Heart right ventricle (tissue), 16 donors: ENCODE measurements at regions of chr2 and their contacts with region 1.

Region 1: DNA sequence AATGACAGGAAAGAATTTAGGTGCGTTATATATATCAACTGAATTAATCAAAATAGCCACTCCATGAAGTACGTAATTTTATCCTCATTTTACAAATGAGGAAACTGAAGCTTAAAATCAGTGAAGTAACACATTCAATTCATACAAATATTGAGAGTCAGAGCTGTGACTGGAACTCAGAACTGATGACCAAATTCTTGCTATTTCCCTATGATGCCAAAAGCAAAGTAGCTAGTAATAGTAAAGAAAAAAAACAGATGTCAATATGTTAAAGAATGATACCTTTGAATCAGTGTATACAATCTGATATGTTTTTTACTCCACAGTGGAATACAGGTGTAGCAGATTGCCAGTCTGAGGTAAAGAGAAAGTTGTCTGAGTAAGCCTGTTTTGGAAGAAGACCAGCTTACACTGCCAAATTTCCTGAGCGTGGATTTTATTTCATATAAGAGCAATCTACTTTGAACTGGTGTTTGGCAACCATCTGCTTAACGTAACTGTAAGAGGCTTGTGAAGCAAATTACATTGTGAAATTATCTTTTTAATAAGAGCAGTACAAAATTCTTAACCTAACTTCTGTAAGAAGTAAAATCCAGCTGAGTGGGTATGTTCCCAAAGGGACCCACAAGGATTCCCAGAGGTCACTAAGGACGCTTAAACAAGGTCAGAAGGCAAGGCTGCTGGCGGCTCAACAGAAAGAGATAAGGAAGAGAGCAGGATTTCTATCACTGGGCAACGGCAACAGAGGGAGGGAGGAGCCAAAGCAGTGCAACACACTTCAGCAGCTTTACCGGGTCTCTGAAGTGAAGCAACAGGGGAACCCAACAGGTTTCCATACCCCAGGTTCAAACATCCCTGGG is 85.6 kb downstream of the IKZF2 start:
- DNase-seq: peak; percentile 22 to 29
- ATAC-seq: peak in 7 of 8 donors; percentile 51 to 91 (median 89)
- H3K4me3 ChIP-seq: peak overlapping the region in 8 of 10 donors; percentile 1 to 35 (median 29)
- H3K27ac ChIP-seq: peak overlapping the region in 8 of 10 donors; percentile 3 to 61 (median 52)
- H3K4me1 ChIP-seq: peaks cover 0 to 29% (median 10%) of the 10 kb centered on the region in 9 donors
- H3K27me3 ChIP-seq: no peaks in the 10 kb centered on the region
- CTCF ChIP-seq: no peak

Region 2: GRCh38 chr2:212940816-212941215 is 125.0 kb before region 1 on chr2:
- intact Hi-C with region 1: loop called in 1 of 10 experiments (anchors 10 kb)
- DNase-seq: peak in 1 of 2 donors; percentile 38
- ATAC-seq: peak in 4 of 8 donors; percentile 56 to 68 (median 66)
- H3K4me3 ChIP-seq: no peak overlapping the region
- H3K27ac ChIP-seq: no peak overlapping the region
- H3K4me1 ChIP-seq: peaks cover 0 to 14% (median 8%) of the 10 kb centered on the region in 9 donors
- H3K27me3 ChIP-seq: no peaks in the 10 kb centered on the region
- CTCF ChIP-seq: no peak

Region 3: DNA sequence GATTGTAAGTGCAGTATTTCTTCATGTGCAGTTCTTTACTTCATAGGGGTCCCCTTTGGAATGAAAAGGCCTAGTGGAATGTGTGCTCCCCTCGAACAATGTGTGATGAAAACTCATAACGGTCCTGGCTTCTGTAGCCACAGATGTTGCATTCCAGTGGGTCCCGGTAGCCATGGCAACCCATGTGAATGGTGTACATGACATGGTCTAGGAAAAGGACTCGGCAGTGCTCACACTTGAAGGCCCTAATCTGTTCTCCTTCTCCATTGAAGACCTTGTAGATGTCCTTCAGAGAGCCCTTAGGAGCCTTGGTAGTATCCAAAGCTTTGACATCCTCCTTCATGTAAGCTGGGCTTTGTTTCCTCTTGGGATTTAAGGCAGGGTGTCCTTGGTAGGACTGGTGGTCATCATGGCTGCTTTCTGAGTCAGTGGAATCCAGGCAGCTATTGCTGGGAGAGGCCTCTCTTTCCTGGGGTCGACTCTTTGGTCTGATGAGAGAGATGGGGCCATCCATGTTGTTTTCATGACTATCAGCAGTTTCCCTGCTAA is 58.4 kb before region 1 on chr2:
- intact Hi-C with region 1: loop called in 1 of 10 experiments (anchors 2 kb)
- DNase-seq: no peak
- ATAC-seq: no peak
- H3K4me3 ChIP-seq: no peak overlapping the region
- H3K27ac ChIP-seq: no peak overlapping the region
- H3K4me1 ChIP-seq: peaks cover 0 to 8% (median 2%) of the 10 kb centered on the region in 9 donors
- H3K27me3 ChIP-seq: no peaks in the 10 kb centered on the region
- CTCF ChIP-seq: no peak

Region 4: DNA sequence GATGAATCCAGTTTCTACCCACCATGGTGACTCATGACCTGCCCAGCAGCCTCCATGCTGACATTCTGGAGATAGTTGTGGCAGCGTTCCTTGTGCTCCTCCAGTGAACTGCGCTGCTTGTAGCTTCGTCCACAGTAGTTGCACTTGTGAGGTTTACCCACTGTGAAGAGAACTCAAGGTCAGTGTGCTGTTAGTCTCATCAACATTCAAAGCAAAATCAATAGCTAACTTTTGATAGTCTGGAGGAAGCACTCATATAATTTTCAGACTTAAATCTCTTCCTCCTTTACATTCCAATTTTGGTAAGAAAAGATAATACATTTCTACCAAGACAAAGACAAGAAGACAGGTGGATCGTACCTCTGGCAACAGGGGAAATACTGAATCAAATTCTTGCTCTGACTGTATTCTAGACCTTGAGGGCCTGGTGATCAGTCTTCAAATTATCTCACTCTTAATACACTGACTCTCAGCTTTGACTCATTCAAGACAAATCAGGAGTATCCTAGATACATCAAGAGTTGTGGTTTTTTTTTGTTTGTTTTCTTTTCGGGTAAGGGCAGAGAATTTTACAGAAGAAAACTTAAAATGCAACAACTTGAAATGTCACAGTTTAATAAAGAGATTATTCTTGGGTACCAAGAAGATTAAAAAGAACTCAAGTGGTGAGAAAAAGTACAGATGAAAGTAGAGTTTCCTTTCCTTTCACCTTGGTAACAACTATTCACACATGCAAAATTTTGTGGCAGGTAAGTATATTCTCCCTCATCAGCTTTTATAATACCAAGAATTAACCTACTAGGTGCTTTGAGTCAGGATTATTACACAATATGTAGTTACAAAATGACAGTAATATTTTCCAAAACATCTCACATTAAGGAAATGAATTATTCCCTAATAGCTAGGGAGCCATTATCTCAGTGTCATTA is 43.6 kb before region 1 on chr2:
- intact Hi-C with region 1: no loop called
- DNase-seq: no peak
- ATAC-seq: no peak
- H3K4me3 ChIP-seq: no peak overlapping the region
- H3K27ac ChIP-seq: no peak overlapping the region
- H3K4me1 ChIP-seq: peaks cover 0 to 3% (median 0%) of the 10 kb centered on the region in 9 donors
- H3K27me3 ChIP-seq: no peaks in the 10 kb centered on the region
- CTCF ChIP-seq: no peak

Region 5: DNA sequence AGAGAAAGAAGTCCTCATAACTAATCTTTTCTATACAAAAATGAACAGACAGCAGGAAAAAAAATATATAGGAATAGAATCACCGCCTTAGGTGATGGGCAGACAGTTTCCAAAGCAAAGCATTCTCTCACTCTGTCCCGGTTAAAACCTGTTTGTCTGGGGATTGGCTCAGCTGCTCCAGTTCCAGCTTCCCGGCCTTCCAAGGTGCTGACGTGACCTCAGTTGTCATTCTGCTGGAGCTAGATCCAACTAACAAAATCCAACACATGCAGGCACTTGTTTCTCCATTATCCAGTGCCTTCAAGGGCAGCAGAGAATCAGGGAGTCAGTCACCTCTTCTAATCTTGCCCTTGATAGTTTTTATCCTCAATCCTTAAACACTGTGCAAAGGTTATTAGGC is 32.8 kb after region 1 on chr2:
- intact Hi-C with region 1: no loop called
- DNase-seq: peak; percentile 26 to 34
- ATAC-seq: peak in 7 of 8 donors; percentile 46 to 90 (median 85)
- H3K4me3 ChIP-seq: no peak overlapping the region
- H3K27ac ChIP-seq: peak overlapping the region in 7 of 10 donors; percentile 5 to 53 (median 13)
- H3K4me1 ChIP-seq: peaks cover 0 to 26% (median 5%) of the 10 kb centered on the region in 9 donors
- H3K27me3 ChIP-seq: no peaks in the 10 kb centered on the region
- CTCF ChIP-seq: no peak

Region 6: DNA sequence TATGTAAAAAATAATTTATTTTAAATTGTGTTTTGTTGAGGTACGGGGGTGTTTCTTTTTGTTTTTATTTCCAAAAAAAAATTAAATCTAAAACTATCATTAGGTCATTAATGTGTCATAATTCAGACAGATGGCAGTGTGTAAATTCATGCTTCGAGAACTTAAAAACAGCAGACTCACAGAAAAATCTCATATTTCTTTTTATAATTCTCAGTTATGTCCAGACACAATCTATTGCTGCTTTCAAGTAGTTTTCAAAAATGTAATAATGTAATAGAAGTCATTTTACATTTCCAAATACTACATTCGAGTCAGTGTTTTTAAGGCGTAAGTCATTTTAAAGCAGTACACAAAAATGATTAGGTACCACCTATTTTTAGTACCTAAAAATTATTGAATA is 71.3 kb after region 1 on chr2:
- intact Hi-C with region 1: no loop called
- DNase-seq: no peak
- ATAC-seq: no peak
- H3K4me3 ChIP-seq: no peak overlapping the region
- H3K27ac ChIP-seq: no peak overlapping the region
- H3K4me1 ChIP-seq: no peaks in the 10 kb centered on the region
- H3K27me3 ChIP-seq: no peaks in the 10 kb centered on the region
- CTCF ChIP-seq: no peak

Region 7: GRCh38 chr2:213151437-213152064 is 85.7 kb after region 1 on chr2 and contains the start of gene IKZF2:
- intact Hi-C with region 1: loop called in 1 of 10 experiments (anchors 5 kb)
- DNase-seq: peak; percentile 82 to 84
- ATAC-seq: peak; percentile 85 to 98 (median 93)
- H3K4me3 ChIP-seq: peak within 1 kb of the TSS; percentile 16 to 93 (median 88)
- H3K27ac ChIP-seq: peak within 1 kb of the TSS; percentile 86 to 97 (median 92)
- H3K4me1 ChIP-seq: peaks cover 0 to 38% (median 13%) of the 10 kb centered on the region in 9 donors
- H3K27me3 ChIP-seq: peaks cover 0 to 7% (median 0%) of the 10 kb centered on the region in 7 donors
- CTCF ChIP-seq: no peak
- total RNA-seq, gene IKZF2: 2.0 to 8.1 (median 6.0) TPM

Region 8: DNA sequence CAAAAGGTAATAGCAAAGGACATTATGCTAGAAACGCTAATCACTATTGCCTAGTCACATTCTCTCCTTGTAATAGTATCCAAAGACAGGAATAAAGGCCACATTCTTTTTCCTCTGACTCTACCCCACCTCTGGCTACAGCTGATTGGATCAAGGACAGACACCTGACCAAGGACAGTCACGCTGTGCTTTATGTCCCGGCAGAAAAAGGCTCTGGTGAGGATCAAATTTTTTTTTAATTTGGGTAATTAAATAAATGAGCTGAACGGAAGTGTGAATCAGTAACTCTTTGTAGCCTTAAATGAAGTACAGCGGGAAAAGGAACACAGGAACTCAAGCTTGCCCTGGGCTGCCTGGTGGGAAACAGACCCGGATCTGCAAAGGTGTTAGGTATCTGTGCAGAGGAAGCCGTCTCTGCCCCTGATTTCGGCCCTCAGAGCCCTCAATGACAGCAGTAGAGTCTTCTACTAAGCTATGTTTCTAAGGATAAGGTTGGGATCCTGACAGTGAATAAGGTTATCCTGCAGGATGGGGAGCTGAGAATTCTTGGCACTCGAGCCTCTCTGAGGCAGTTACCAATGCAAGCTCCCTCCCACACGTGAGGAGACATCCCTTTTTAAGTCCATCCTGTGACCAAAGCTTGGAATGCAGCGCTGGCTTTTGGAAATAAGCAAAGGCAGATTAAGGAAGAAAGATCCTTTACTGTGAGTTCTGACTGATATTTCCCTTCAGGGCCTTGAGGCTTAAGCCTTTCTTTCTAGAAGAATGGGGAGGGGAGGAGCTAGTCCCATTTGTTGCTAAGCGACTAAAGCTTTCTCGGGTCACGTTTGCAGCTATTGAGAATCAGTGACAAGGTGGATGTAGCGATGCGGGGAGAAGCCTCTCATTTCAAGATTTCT is 123.4 kb after region 1 on chr2:
- intact Hi-C with region 1: no loop called
- DNase-seq: no peak
- ATAC-seq: peak in 2 of 8 donors; percentile 14 to 20
- H3K4me3 ChIP-seq: peak overlapping the region in 1 of 10 donors; percentile 14
- H3K27ac ChIP-seq: no peak overlapping the region
- H3K4me1 ChIP-seq: peaks cover 0 to 3% (median 0%) of the 10 kb centered on the region in 9 donors
- H3K27me3 ChIP-seq: no peaks in the 10 kb centered on the region
- CTCF ChIP-seq: no peak